ENCODE measurements at regions of chr11 and their contacts with region 1.

Region 1: DNA sequence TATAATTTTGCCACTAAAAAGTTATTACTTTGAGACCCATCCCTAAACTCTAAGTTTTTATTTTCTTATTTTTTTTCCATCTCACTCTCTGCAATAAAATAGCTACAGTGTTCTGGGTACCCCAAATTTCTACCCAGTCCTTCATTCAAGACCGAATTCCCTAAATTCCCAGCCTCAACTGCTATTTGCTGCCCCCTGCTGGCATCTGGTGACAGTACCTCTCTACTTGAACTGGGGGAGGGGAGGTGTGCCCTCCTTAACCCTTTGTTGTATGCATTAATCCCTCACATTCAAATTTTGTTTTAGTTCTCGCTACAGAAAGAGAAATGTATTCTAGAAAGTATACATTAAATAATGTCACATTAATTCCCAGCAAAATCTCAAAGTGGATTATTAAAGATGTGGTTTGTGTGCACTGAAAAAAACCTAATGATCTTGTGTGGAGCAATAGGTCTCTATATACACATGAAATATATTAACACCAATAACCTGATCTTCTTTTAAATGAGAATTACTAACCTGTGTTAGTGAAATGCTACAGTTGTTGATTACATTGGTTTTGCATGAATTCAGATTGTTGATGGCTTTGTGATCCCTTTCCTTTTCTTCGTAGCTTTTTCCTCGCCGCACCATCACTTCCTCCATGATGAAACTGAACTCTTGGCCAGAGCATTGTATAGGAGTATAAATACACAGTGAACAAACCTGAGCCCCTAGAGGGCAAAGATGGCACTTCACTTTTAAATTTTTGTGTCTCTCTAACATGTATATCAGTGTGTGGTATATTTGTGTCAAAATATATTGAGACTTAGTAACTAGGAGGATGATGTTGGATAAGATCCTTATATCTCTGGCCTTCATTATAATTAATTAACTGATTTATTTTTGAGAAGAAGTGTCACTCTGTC is 590.0 kb downstream of the METTL15 start:
- DNase-seq: peak; percentile 76
- ATAC-seq: no peak
- H3K4me3 ChIP-seq: no peak overlapping the region
- H3K27ac ChIP-seq: no peak overlapping the region
- H3K4me1 ChIP-seq: peaks cover 24% of the 10 kb centered on the region
- H3K27me3 ChIP-seq: no peaks in the 10 kb centered on the region
- CTCF ChIP-seq: peak; percentile 90

Region 2: DNA sequence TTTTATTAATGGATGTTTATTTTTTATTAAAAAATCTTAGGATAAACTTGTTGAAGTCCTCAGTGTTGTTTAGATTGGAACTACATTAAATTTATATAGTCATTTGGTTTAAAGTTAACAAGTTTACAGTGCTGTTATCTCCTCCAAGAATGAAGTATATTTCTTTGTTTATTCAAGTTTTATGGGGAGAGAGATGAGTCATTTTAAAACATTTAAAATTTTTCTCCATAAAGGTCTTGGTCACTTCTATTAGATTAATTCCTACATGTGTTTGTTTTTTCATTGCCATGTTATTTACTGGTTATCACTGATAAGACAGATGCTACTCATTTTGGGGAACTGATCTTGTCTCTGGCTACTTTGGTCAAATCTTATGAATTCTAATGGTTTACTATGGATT is 160.4 kb before region 1 on chr11:
- CTCF ChIA-PET with region 1: no interaction called
- POLR2A ChIA-PET with region 1: no interaction called
- intact Hi-C with region 1: loop called (anchors 5 kb)
- DNase-seq: peak; percentile 71
- ATAC-seq: peak; percentile 65
- H3K4me3 ChIP-seq: no peak overlapping the region
- H3K27ac ChIP-seq: peak overlapping the region; percentile 43
- H3K4me1 ChIP-seq: peaks cover 27% of the 10 kb centered on the region
- H3K27me3 ChIP-seq: no peaks in the 10 kb centered on the region
- CTCF ChIP-seq: no peak

Region 3: DNA sequence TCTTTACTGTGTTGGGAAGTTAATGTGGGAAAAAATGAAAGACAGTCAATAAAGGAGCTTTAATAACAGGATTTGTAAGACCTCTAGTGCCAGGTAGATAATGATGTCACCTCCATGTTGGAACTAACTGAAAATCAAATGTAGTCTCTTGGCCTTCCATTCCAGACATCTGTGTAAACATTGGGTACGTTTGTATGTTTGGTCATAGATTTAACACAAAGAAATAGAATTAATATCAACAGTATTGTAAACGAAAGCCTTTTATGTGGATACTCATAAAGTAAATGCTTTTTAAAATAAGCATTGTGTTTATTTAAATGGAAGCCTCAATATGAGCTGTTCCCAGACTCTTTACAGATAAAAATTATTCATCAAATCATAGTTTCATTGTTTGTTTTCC is 15.7 kb after region 1 on chr11:
- CTCF ChIA-PET with region 1: no interaction called
- POLR2A ChIA-PET with region 1: no interaction called
- intact Hi-C with region 1: loop called (anchors 1 kb)
- DNase-seq: peak; percentile 57
- ATAC-seq: peak; percentile 85
- H3K4me3 ChIP-seq: no peak overlapping the region
- H3K27ac ChIP-seq: peak overlapping the region; percentile 85
- H3K4me1 ChIP-seq: peaks cover 32% of the 10 kb centered on the region
- H3K27me3 ChIP-seq: no peaks in the 10 kb centered on the region
- CTCF ChIP-seq: no peak

Region 4: DNA sequence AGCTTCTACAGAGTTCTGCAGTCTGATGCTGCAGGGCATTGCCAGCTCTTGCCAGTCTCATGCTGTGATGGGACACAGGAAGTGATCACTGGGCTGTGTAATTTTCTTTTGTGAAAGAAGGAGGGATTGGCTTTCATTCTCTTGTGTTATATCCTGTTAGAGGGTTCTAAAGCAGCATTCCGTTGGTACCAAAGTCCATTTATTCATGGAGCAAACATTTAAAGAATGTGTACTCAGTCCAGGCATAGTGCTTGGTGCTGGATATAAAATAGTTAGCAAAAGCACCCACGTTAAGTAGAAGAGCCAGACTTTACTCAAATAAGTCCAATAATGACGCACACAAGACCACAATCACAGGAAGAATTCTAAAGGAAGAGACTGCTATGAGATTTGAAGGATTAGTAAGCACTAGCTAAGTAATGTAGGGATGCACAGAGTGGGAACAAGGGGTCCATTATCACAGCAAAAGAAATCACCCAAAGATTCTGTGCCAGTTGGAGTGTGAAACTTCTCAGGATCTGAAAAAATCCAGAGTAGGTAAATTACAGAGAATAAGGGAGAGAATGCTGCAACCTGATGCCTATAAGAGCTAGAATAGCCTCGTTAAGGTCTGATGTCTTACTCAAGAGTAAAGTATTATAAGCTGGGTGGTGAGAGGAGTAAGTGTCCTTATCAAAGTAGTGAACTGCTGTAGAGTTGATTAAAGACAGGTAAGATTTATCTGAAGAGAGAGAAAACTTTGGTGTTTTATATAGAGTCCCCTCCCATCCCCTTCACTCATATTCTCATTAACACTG is 138.3 kb after region 1 on chr11:
- CTCF ChIA-PET with region 1: no interaction called
- POLR2A ChIA-PET with region 1: no interaction called
- intact Hi-C with region 1: loop called (anchors 5 kb)
- DNase-seq: peak; percentile 90
- ATAC-seq: peak; percentile 74
- H3K4me3 ChIP-seq: peak overlapping the region; percentile 8; the same call in 1 of the 2 replicates
- H3K27ac ChIP-seq: peak overlapping the region; percentile 94
- H3K4me1 ChIP-seq: peaks cover 62% of the 10 kb centered on the region
- H3K27me3 ChIP-seq: no peaks in the 10 kb centered on the region
- CTCF ChIP-seq: no peak

Region 5: GRCh38 chr11:29159552-29160465 is 461.6 kb after region 1 on chr11:
- CTCF ChIA-PET with region 1: interaction called, 8 read pairs
- POLR2A ChIA-PET with region 1: no interaction called
- intact Hi-C with region 1: loop called (anchors 1 kb)
- DNase-seq: peak; percentile 84
- ATAC-seq: peak; percentile 93
- H3K4me3 ChIP-seq: no peak overlapping the region
- H3K27ac ChIP-seq: no peak overlapping the region
- H3K4me1 ChIP-seq: peaks cover 7% of the 10 kb centered on the region; the same call in 1 of the 2 replicates
- H3K27me3 ChIP-seq: no peaks in the 10 kb centered on the region
- CTCF ChIP-seq: peak; percentile 88